Posterior vena cava (tissue), 2 donors: ENCODE measurements at regions of chr2 and their contacts with region 1.

Region 1: GRCh38 chr2:218852911-218853667 is 6.5 kb upstream of the WNT6 start:
- DNase-seq: peak; percentile 85

Region 2: GRCh38 chr2:218557941-218558340 is 295.1 kb before region 1 on chr2:
- intact Hi-C with region 1: no loop called
- DNase-seq: no peak

Region 3: GRCh38 chr2:218710687-218711549 is 142.2 kb before region 1 on chr2 and contains the start of gene TTLL4:
- intact Hi-C with region 1: loop called in 1 of 2 experiments (anchors 10 kb)
- DNase-seq: peak; percentile 100
- total RNA-seq, gene TTLL4: 14.6 to 17.5 TPM

Region 4: DNA sequence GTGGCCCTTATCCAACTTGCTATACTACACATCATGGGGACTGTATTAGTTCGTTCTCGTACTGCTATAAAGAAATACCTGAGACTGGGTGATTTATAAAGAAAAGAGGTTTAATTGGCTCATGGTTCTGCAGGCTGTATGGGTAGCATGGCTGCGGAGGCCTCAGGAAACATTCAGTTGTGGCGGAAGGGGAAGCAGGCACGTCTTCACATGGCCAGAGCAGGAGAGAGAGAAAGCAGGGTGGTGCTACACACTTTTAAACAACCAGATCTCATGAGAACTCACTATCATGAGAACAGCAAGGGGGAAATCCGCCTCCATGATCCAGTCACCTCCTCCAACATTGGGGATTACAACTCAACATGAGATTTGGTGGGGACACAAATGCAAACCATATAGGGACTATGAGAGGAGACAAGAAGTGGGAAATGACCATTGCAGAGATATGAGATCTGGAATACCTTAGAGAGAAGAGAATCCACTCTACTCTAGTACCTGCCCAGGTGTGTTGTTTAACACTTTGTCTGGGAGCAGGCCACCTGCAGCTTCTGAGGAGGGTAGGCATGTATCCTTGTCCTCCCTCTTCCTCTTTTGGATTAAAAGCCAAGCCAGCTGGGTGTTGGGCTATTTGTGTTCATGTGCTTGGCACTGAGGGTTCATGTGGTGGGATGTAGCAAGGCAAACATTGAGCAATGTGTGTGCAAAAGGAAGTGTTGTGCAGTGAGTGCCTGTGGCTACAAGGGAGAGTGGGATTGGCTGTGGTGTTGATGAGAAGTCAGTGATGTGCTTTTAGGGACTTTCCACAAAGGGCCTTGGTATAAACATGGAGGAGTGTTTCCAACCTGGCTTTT is 119.7 kb before region 1 on chr2:
- intact Hi-C with region 1: loop called in 1 of 2 experiments (anchors 10 kb)
- DNase-seq: no peak

Region 5: GRCh38 chr2:219642465-219643080 is 789.5 kb after region 1 on chr2:
- intact Hi-C with region 1: loop called in 1 of 2 experiments (anchors 10 kb)
- DNase-seq: peak; percentile 99